MCF 10A (cell line): ENCODE measurements at regions of chr1 and their contacts with region 1.

Region 1: GRCh38 chr1:180586671-180587155 is 27.9 kb downstream of the OVAAL start:
- DNase-seq: peak; percentile 93
- H3K4me3 Mint-ChIP-seq: no peak overlapping the region
- H3K27ac Mint-ChIP-seq: peak overlapping the region; percentile 99
- H3K4me1 Mint-ChIP-seq: peaks cover 34% of the 10 kb centered on the region
- H3K27me3 Mint-ChIP-seq: no peaks in the 10 kb centered on the region
- CTCF ChIP-seq: no peak

Region 2: GRCh38 chr1:180502360-180503273 is 84.1 kb before region 1 on chr1 and contains the start of gene ACBD6:
- CTCF ChIA-PET with region 1: interaction called, 3 read pairs
- POLR2A ChIA-PET with region 1: interaction called, 20 read pairs
- intact Hi-C with region 1: no loop called
- DNase-seq: peak; percentile 94
- H3K4me3 Mint-ChIP-seq: peak within 1 kb of the TSS; percentile 94
- H3K27ac Mint-ChIP-seq: peak within 1 kb of the TSS; percentile 97
- H3K4me1 Mint-ChIP-seq: peaks cover 29% of the 10 kb centered on the region
- H3K27me3 Mint-ChIP-seq: no peaks in the 10 kb centered on the region
- CTCF ChIP-seq: no peak
- total RNA-seq, gene ACBD6: 123 and 136 TPM in 2 replicates

Region 3: DNA sequence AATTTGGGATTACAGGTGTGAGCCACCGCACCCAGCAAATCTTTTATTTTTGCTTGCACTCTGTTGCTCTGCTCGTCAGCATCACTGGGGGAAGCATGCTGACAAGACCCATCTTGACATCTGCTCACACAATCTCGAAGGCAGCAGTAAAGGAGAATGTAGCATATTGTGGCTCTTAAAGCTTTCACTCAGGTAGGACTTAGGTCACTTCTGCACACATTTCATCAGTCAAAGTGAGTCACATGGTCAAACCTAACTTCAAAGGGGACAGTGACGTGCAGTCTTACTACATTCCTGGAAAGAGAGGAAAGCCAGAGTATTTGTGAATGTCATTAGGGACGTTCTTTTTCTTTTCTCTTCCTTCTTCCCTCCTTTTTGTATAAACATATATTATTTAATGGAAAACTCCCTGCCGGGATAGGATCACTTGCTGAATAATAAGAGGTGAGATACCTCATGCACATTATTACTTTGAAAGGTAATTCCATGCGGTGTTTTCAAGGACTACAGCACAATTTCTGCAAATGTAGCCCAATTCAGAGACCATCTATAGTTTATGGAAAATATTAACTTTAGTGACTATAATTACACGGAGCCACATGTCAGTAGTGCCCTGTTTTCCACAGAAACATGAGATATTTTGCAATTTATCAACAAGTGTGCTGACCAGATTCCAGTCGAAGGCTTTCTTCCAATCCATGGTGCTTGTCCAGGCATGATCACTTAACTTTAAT is 65.1 kb before region 1 on chr1:
- CTCF ChIA-PET with region 1: interaction called, 9 read pairs
- POLR2A ChIA-PET with region 1: interaction called, 27 read pairs
- intact Hi-C with region 1: no loop called
- DNase-seq: peak; percentile 96
- H3K4me3 Mint-ChIP-seq: peak overlapping the region; percentile 34
- H3K27ac Mint-ChIP-seq: peak overlapping the region; percentile 82
- H3K4me1 Mint-ChIP-seq: peaks cover 61% of the 10 kb centered on the region
- H3K27me3 Mint-ChIP-seq: no peaks in the 10 kb centered on the region
- CTCF ChIP-seq: no peak

Region 4: GRCh38 chr1:180527101-180527669 is 59.5 kb before region 1 on chr1:
- CTCF ChIA-PET with region 1: interaction called, 9 read pairs
- POLR2A ChIA-PET with region 1: interaction called, 27 read pairs
- intact Hi-C with region 1: no loop called
- DNase-seq: peak; percentile 82
- H3K4me3 Mint-ChIP-seq: no peak overlapping the region
- H3K27ac Mint-ChIP-seq: peak overlapping the region; percentile 92
- H3K4me1 Mint-ChIP-seq: peaks cover 81% of the 10 kb centered on the region
- H3K27me3 Mint-ChIP-seq: no peaks in the 10 kb centered on the region
- CTCF ChIP-seq: no peak

Region 5: DNA sequence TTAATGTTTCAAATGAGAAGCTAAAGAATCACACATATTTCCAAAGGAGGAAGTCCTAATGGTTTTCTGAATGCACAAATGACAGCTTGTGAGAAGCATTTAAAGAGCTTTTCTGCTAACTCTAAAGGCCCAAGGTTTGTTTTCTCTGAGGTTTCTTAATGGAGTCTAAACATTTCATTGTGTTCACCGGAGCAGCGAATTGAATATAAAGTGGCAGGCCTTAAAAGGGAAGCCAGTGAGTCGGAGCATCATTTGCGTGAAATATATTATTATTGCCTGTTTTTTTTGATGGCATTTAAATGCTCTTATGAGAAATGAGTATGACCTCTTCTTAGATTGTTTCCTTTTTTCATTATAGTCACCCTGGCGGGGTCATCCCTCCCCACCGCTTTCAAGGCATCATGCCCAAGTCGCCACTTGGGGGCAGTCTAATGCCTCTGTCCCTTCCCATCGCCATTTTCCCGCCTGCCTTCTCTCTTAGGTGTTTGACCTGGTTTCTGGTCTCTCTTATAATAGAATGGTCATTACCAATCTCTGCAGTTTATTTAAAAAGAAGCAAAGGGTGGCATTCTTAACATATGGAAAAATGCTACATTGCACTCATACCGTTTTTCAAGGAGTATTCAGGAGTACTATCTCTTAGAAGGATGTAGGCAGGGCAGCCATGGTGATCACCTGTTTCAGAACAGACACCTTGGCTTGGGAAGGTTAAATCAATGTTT is 53.3 kb before region 1 on chr1:
- CTCF ChIA-PET with region 1: interaction called, 5 read pairs
- POLR2A ChIA-PET with region 1: interaction called, 20 read pairs
- intact Hi-C with region 1: no loop called
- DNase-seq: peak; percentile 88
- H3K4me3 Mint-ChIP-seq: no peak overlapping the region
- H3K27ac Mint-ChIP-seq: no peak overlapping the region
- H3K4me1 Mint-ChIP-seq: peaks cover 43% of the 10 kb centered on the region
- H3K27me3 Mint-ChIP-seq: no peaks in the 10 kb centered on the region
- CTCF ChIP-seq: peak; percentile 90

Region 6: DNA sequence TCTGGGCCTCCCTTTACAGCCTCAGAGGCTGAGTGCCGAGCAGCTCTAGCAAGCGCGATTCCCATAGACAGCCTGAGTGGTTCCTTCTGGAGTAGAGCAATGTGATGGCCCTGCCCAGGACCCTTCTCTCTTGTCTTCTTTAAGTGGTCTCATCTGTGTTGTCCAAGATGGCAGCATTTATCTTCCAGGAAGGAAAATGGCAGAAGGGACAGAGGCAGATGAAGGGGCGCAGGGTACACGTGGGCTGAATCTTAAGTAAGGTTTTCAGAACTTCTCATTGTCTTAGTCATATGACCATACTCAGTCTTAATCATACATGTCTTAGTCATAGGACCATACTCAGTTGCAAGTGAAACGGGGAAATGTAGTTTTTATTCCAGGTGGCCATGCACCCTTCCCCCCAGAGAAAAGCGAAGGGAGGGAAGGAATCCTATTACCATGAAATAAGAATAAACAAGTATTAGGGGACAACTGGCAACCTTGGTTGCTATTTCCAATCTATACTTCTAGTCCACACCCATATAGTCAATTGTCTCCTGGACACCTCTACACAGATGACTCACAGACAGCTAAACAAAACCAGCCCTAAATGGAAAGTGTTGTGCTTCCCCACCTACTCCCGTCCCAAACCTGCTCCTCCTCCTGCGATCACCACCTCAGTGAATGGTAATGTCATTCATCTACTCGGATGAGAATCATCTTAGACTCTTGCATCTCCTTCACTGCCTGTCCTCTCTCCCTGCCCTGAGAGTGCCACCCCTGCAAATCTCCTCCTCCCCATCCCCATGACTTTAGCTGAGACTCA is 14.7 kb before region 1 on chr1:
- CTCF ChIA-PET with region 1: interaction called, 7 read pairs
- POLR2A ChIA-PET with region 1: interaction called, 26 read pairs
- intact Hi-C with region 1: no loop called
- DNase-seq: peak; percentile 64
- H3K4me3 Mint-ChIP-seq: no peak overlapping the region
- H3K27ac Mint-ChIP-seq: no peak overlapping the region
- H3K4me1 Mint-ChIP-seq: peaks cover 42% of the 10 kb centered on the region
- H3K27me3 Mint-ChIP-seq: no peaks in the 10 kb centered on the region
- CTCF ChIP-seq: no peak

Region 7: GRCh38 chr1:180611016-180611930 is 24.6 kb after region 1 on chr1:
- CTCF ChIA-PET with region 1: interaction called, 12 read pairs
- POLR2A ChIA-PET with region 1: interaction called, 8 read pairs
- intact Hi-C with region 1: no loop called
- DNase-seq: no peak
- H3K4me3 Mint-ChIP-seq: no peak overlapping the region
- H3K27ac Mint-ChIP-seq: no peak overlapping the region
- H3K4me1 Mint-ChIP-seq: no peaks in the 10 kb centered on the region
- H3K27me3 Mint-ChIP-seq: no peaks in the 10 kb centered on the region
- CTCF ChIP-seq: no peak

Region 8: DNA sequence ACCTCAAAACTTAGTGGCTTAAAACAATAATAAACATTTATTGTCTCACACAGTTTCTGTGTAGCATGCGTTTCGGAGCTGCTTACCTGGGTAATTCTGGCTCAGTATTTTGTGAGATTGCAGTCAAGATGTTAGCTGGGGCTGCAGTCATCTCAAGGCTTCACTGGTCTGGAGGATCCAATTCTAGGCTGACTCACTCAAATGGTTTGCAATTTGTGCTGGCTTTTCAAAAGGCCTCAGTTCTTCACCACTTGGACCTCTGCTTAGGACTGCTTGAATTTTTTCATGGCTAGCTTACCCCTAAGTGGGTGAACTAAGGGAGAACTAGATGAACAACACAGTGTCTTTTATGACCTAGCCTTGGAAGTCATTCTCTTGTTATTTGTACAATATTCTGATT is 66.1 kb after region 1 on chr1:
- CTCF ChIA-PET with region 1: no interaction called
- POLR2A ChIA-PET with region 1: no interaction called
- intact Hi-C with region 1: no loop called
- DNase-seq: no peak
- H3K4me3 Mint-ChIP-seq: no peak overlapping the region
- H3K27ac Mint-ChIP-seq: no peak overlapping the region
- H3K4me1 Mint-ChIP-seq: peaks cover 11% of the 10 kb centered on the region
- H3K27me3 Mint-ChIP-seq: no peaks in the 10 kb centered on the region
- CTCF ChIP-seq: no peak